Endothelial cell of umbilical vein (primary cell): ENCODE measurements at regions of chrX and their contacts with region 1.

Region 1: DNA sequence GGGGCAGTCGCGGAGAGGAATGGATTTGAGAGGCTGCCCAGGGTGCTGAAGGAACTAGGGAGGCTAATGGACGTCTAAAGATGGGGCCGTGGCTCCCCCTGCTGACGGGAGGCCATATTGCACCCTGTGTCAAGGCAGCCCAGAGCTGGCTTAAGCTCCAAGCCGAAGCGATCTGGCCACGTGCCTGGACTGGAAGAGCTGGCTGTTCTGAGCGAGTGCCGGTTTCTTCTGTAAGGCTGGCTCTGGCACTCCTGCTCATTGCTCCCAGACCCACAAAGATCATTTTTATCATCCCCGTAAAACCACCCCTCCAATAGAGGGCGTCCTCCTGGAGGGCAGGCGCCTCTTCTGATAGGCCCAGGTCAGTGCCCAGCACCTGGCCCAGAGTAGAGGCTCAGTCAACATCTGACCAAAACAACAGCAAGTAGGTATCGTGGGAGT is 5.6 kb downstream of the PNCK start:
- DNase-seq: peak; percentile 69
- H3K4me3 ChIP-seq: no peak overlapping the region
- H3K27ac ChIP-seq: no peak overlapping the region
- H3K4me1 ChIP-seq: no peaks in the 10 kb centered on the region
- H3K27me3 ChIP-seq: peaks cover 4 to 5% of the 10 kb centered on the region in 2 experiments
- CTCF ChIP-seq: peak; percentile 64 to 79
- POLR2A ChIP-seq: no peak

Region 2: GRCh38 chrX:152958524-152959465 is 709.2 kb before region 1 on chrX:
- CTCF ChIA-PET with region 1: no interaction called
- POLR2A ChIA-PET with region 1: no interaction called
- dilution Hi-C with region 1: no loop called
- intact Hi-C with region 1: loop called (anchors 1 kb)
- DNase-seq: peak; percentile 89
- H3K4me3 ChIP-seq: peak overlapping the region in 1 of 3 experiments; percentile 9
- H3K27ac ChIP-seq: peak overlapping the region; percentile 9
- H3K4me1 ChIP-seq: no peaks in the 10 kb centered on the region
- H3K27me3 ChIP-seq: no peaks in the 10 kb centered on the region
- CTCF ChIP-seq: peak; percentile 70 to 71
- POLR2A ChIP-seq: peak; percentile 60

Region 3: DNA sequence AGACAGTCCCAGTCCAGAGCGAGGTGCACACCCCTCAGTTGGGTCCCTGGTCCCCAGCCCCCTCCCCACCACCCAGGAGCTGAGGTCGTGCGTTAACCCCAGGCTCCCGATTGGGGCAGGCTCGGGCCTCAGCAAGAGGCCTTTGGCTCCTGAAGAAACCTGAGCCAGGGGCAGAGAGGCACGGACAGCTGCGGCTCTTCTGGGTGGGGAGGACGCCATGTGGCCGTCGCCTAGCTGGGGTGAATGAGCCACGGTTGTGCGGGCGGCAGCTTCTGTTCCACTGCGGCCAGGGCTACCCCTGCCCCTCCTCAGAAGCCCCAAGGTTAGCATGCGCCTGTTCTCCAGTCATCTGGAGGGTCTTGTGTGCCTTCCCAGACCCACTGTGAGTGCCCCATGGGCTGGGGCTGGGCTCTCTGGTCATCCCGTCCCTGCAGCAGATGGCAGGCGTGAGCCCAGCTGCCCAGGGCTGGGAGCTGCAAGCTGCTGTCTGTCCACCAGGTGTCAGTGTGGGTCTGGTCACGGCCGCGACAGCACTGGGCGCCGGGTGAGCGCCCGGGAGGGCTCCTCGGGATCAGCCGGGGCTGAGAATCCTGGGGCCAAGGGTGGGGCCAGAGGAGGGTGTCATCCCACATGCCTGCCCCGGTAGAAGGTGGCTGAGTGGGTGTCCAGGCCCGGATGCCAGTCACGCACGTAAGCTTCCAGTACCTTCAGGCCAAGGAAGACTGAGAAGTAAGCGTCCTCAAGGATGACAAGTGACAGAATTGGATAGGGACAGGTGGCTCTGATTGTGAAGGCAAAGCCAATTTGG is 128.6 kb before region 1 on chrX:
- CTCF ChIA-PET with region 1: interaction called, 60 read pairs
- POLR2A ChIA-PET with region 1: no interaction called
- dilution Hi-C with region 1: no loop called
- intact Hi-C with region 1: loop called (anchors 2 kb)
- DNase-seq: peak; percentile 44
- H3K4me3 ChIP-seq: no peak overlapping the region
- H3K27ac ChIP-seq: no peak overlapping the region
- H3K4me1 ChIP-seq: no peaks in the 10 kb centered on the region
- H3K27me3 ChIP-seq: no peaks in the 10 kb centered on the region
- CTCF ChIP-seq: peak; percentile 69 to 89
- POLR2A ChIP-seq: no peak

Region 4: DNA sequence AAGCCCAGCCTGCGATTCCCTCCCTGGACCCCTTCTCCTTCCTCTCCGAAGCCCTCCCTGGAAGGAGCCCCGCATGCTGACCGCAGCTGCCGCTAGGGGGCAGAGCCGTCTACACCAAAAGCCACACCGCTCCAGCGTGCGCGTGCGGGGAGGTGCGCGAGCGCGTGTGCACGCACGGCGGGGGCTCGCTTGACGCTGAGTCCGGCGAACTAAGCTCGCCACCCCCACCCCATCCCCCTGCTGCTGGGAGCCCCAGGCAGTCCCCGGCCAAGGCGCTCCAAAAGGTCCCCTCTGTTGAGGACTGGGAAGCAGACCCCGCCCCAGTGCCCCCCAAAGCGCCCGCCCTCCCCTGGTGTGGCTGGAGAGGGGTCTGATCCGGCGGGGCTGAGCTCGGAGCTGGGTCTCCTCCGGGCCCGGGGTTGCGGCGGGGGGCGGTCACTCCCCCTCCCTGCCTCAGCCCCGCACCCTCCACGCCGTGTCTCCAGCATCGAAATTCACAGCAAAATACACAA is 58.0 kb before region 1 on chrX:
- CTCF ChIA-PET with region 1: interaction called, 51 read pairs
- POLR2A ChIA-PET with region 1: no interaction called
- dilution Hi-C with region 1: no loop called
- intact Hi-C with region 1: loop called (anchors 1 kb)
- DNase-seq: peak; percentile 65
- H3K4me3 ChIP-seq: peak overlapping the region in 2 of 3 experiments; percentile 11 to 19
- H3K27ac ChIP-seq: no peak overlapping the region
- H3K4me1 ChIP-seq: no peaks in the 10 kb centered on the region
- H3K27me3 ChIP-seq: peaks cover 4 to 6% of the 10 kb centered on the region in 2 experiments
- CTCF ChIP-seq: peak; percentile 63 to 88
- POLR2A ChIP-seq: no peak

Region 5: DNA sequence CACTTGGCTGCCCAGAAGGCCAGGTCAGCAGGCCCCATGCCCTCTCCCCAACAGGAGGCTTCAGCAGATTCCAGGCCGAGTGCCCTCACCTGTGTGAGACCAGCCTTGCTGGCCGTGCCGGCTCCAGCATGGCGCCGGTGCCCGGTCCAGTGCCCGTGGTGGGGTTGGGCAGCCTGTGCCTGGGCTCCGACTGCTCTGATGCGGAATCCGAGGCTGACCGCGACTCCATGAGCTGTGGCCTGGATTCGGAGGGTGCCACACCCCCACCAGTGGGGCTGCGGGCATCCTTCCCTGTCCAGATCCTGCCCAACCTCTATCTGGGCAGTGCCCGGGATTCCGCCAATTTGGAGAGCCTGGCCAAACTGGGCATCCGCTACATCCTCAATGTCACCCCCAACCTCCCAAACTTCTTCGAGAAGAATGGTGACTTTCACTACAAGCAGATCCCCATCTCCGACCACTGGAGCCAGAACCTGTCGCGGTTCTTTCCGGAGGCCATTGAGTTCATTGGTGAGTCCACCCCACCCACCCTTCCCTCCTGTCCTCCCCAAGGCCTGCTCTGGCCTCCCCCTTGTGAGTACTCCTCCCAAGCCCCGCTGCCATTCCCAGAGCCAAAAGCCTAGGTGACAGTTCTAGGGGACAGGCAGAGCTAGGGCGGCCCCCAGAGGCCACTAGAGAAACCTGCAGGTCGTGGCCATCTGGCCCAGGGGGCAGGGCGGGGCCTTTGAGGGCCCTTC is 18.6 kb before region 1 on chrX:
- CTCF ChIA-PET with region 1: interaction called, 11 read pairs
- POLR2A ChIA-PET with region 1: no interaction called
- dilution Hi-C with region 1: no loop called
- intact Hi-C with region 1: no loop called
- DNase-seq: no peak
- H3K4me3 ChIP-seq: no peak overlapping the region
- H3K27ac ChIP-seq: no peak overlapping the region
- H3K4me1 ChIP-seq: no peaks in the 10 kb centered on the region
- H3K27me3 ChIP-seq: peaks cover 34 to 38% of the 10 kb centered on the region in 2 experiments
- CTCF ChIP-seq: peak; percentile 19 to 51
- POLR2A ChIP-seq: no peak

Region 6: GRCh38 chrX:153687121-153688039 is 19.4 kb after region 1 on chrX and contains the start of gene SLC6A8:
- CTCF ChIA-PET with region 1: interaction called, 18 read pairs
- POLR2A ChIA-PET with region 1: no interaction called
- dilution Hi-C with region 1: no loop called
- intact Hi-C with region 1: no loop called
- DNase-seq: peak; percentile 27
- H3K4me3 ChIP-seq: peak within 1 kb of the TSS in 1 of 3 experiments; percentile 40
- H3K27ac ChIP-seq: no peak within 1 kb of the TSS
- H3K4me1 ChIP-seq: peaks cover 4% of the 10 kb centered on the region
- H3K27me3 ChIP-seq: no peaks in the 10 kb centered on the region
- CTCF ChIP-seq: peak in 1 of 2 donors; percentile 55
- POLR2A ChIP-seq: peak; percentile 40
- total RNA-seq, gene SLC6A8: 23.6 and 28.8 TPM in 2 replicates